CD8-positive, alpha-beta T cell (primary cell): ENCODE measurements at regions of chr19 and their contacts with region 1.

Region 1: DNA sequence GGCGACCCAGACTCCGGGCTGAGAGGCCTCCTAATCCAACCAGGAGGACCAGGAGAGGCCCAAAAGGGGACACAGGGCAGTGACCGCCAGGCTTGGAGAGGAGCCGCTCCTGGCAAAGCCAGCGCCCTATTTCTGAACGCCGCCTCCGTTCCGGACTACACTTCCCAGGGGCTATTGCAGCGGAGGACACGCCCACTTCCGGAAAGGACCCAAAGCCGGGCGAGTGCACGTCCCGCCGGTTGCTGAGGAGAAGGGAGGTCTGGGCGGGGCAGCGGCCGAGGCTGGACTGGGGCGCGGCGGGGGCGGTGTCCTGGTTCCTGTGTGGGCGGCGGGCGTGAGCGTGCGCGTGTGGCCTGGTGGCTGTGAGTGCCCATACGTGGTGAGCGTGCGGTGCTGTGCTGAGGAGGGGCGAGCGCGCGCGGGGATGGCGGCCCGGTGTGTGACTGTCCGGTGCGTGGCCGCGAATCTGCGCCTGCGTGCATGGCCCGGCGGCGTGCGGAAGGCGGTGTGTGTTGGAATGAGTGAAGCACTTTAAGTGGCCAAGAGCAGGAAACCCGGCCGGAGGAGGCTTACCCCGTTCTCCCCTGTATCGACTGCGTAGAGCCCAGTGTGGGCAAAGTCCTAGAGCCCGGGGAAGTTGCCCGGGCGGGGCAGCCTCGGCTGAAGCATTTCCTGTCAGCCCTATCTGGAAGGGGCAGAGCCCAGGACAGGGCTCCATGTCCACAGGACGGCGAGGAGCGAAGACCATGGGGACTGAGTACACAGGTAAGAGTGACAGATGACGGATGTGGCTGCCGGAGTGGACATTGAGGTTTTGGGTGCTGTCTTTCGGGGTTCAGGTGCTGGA is at the start of gene ZNF470:
- DNase-seq: peak; percentile 71 to 92 (median 86)
- ATAC-seq: peak; percentile 97
- H3K4me3 ChIP-seq: peak within 1 kb of the TSS; percentile 81 to 97
- H3K4me3 Mint-ChIP-seq: peak within 1 kb of the TSS; percentile 98
- H3K27ac ChIP-seq: peak within 1 kb of the TSS; percentile 52 to 61
- H3K27ac Mint-ChIP-seq: peak within 1 kb of the TSS; percentile 84
- H3K4me1 ChIP-seq: peaks cover 6% of the 10 kb centered on the region
- H3K4me1 Mint-ChIP-seq: peaks cover 22% of the 10 kb centered on the region
- H3K27me3 ChIP-seq: no peaks in the 10 kb centered on the region
- H3K27me3 Mint-ChIP-seq: no peaks in the 10 kb centered on the region
- CTCF ChIP-seq: no peak
- total RNA-seq, gene ZNF470: 0.33 to 1.1 TPM

Region 2: GRCh38 chr19:56121180-56122167 is 446.0 kb before region 1 on chr19 and contains the start of gene ZNF787:
- CTCF ChIA-PET with region 1: no interaction called
- POLR2A ChIA-PET with region 1: no interaction called
- intact Hi-C with region 1: loop called in 1 of 2 experiments (anchors 2 kb)
- DNase-seq: peak; percentile 94 to 99 (median 97)
- ATAC-seq: peak; percentile 82
- H3K4me3 ChIP-seq: peak within 1 kb of the TSS; percentile 56 to 67
- H3K4me3 Mint-ChIP-seq: peak within 1 kb of the TSS; percentile 88
- H3K27ac ChIP-seq: peak within 1 kb of the TSS; percentile 81 to 97
- H3K27ac Mint-ChIP-seq: peak within 1 kb of the TSS; percentile 94
- H3K4me1 ChIP-seq: peaks cover 24% of the 10 kb centered on the region
- H3K4me1 Mint-ChIP-seq: peaks cover 43% of the 10 kb centered on the region
- H3K27me3 ChIP-seq: no peaks in the 10 kb centered on the region
- H3K27me3 Mint-ChIP-seq: no peaks in the 10 kb centered on the region
- CTCF ChIP-seq: no peak
- total RNA-seq, gene ZNF787: 10.2 to 10.8 TPM

Region 3: DNA sequence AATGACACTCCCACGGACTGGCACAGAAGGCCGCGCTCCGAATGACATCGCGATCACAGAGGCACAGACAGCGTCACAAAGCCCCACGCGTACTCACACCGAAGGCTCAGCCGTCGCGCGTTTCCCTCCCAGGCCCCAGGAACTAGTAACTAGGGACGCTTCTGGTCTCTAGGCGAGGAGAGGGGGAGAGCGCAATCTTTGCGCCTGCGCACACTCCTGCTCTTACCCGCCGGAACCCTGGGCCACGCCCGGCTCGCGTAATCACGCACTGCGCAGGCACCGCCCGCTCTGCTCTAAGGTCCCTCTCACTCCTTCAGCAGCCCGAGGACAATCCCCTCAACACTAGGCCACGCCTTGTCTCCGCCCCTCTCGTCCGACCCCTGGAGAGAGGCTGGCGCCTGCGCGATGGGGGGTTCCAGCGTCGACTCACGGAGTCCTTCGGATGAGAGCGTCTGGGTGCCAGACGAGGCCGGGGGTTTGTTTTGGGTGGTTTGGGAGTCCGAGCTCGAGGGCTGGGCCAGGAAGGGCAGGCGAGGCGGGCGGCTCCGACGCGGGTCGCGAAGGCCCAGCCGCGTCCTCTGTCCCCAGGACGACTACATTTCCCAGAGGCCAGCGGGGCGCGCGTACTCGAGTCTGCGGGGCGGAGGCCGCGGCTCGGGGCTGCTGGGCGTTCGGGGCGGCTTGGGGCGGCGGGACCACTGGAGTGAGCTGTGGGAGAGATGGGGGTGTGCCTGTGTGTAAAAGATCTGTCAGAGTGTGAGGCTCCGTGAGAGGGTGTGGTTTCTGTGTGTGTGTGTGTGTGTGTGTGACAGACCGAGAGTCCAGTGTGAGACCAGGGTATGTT is 59.8 kb before region 1 on chr19 and contains the start of gene ZNF471:
- CTCF ChIA-PET with region 1: no interaction called
- POLR2A ChIA-PET with region 1: no interaction called
- intact Hi-C with region 1: loop called in 1 of 2 experiments (anchors 2 kb)
- DNase-seq: peak; percentile 62 to 96 (median 79)
- ATAC-seq: peak; percentile 98
- H3K4me3 ChIP-seq: peak within 1 kb of the TSS; percentile 39 to 73
- H3K4me3 Mint-ChIP-seq: no peak within 1 kb of the TSS
- H3K27ac ChIP-seq: peak within 1 kb of the TSS; percentile 76
- H3K27ac Mint-ChIP-seq: no peak within 1 kb of the TSS
- H3K4me1 ChIP-seq: peaks cover 8% of the 10 kb centered on the region
- H3K4me1 Mint-ChIP-seq: peaks cover 9% of the 10 kb centered on the region
- H3K27me3 ChIP-seq: peaks cover 0 to 3% of the 10 kb centered on the region in 2 experiments
- H3K27me3 Mint-ChIP-seq: peaks cover 3% of the 10 kb centered on the region
- CTCF ChIP-seq: no peak
- total RNA-seq, gene ZNF471: 0.67 to 0.71 TPM

Region 4: GRCh38 chr19:56594783-56595547 is 27.5 kb after region 1 on chr19 and contains the start of gene ZNF71:
- CTCF ChIA-PET with region 1: no interaction called
- POLR2A ChIA-PET with region 1: interaction called, 5 read pairs
- intact Hi-C with region 1: loop called (anchors 1 kb)
- DNase-seq: peak; percentile 72 to 91 (median 87)
- ATAC-seq: peak; percentile 96
- H3K4me3 ChIP-seq: peak within 1 kb of the TSS; percentile 45 to 72
- H3K4me3 Mint-ChIP-seq: peak within 1 kb of the TSS; percentile 91
- H3K27ac ChIP-seq: peak within 1 kb of the TSS; percentile 58 to 65
- H3K27ac Mint-ChIP-seq: peak within 1 kb of the TSS; percentile 91
- H3K4me1 ChIP-seq: peaks cover 18% of the 10 kb centered on the region
- H3K4me1 Mint-ChIP-seq: peaks cover 19% of the 10 kb centered on the region
- H3K27me3 ChIP-seq: no peaks in the 10 kb centered on the region
- H3K27me3 Mint-ChIP-seq: no peaks in the 10 kb centered on the region
- CTCF ChIP-seq: no peak
- total RNA-seq, gene ZNF71: 2.4 to 2.8 TPM

Region 5: DNA sequence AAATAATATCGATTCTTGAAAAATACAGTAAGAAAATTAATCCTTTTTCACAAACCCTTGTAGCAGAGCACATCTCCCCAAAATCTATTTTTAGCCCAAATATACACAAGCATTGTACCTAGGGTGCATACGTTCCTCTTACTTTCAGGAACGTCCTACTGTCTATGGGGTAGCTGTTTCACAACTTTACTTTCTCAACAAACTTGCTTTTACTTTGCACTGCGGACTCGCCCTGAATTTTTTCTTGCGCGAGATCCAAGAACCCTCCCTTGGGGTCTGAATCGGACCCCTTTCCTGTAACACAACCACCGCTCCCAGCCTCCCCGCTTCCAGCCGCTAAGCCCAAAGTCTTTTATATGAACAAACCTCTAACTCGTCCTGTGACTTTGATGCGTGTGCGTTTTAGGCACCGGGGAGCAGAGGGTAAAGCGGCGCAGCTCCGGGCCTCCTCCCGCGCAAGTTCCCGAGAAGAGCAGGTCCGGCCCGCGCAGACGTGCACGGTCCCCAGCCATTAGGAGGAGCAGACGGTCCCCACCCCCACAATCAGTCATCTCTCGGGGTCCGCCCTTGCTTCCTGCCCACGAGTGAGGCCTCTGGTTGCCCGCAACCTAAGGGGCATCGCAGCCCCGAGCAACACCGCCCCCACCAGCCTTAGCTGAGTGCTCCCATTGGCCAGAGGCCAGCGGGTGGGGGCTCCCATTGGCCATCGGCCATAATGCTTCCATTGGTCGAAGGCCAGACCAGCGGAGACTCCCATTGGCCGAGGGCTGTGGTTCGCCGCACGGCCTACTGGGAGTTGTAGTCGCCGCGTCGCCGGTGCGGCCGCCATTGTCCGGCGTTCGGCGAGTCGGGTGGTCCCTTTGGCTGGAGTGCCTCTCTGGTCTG is 1710.9 kb after region 1 on chr19 and contains the start of gene ZNF8:
- CTCF ChIA-PET with region 1: no interaction called
- POLR2A ChIA-PET with region 1: no interaction called
- intact Hi-C with region 1: loop called in 1 of 2 experiments (anchors 10 kb)
- DNase-seq: peak; percentile 89 to 99 (median 97)
- ATAC-seq: peak; percentile 97
- H3K4me3 ChIP-seq: peak within 1 kb of the TSS; percentile 67 to 92
- H3K4me3 Mint-ChIP-seq: peak within 1 kb of the TSS; percentile 99
- H3K27ac ChIP-seq: peak within 1 kb of the TSS; percentile 72 to 85
- H3K27ac Mint-ChIP-seq: peak within 1 kb of the TSS; percentile 96
- H3K4me1 ChIP-seq: peaks cover 26% of the 10 kb centered on the region
- H3K4me1 Mint-ChIP-seq: peaks cover 50% of the 10 kb centered on the region
- H3K27me3 ChIP-seq: no peaks in the 10 kb centered on the region
- H3K27me3 Mint-ChIP-seq: no peaks in the 10 kb centered on the region
- CTCF ChIP-seq: no peak
- total RNA-seq, gene ZNF8: 9.2 to 9.5 TPM